Activated CD4-positive, alpha-beta T cell treated with anti-CD3 and anti-CD28 coated beads for 36 hours (primary cell): ENCODE measurements at regions of chr14 and their contacts with region 1.

Region 1: DNA sequence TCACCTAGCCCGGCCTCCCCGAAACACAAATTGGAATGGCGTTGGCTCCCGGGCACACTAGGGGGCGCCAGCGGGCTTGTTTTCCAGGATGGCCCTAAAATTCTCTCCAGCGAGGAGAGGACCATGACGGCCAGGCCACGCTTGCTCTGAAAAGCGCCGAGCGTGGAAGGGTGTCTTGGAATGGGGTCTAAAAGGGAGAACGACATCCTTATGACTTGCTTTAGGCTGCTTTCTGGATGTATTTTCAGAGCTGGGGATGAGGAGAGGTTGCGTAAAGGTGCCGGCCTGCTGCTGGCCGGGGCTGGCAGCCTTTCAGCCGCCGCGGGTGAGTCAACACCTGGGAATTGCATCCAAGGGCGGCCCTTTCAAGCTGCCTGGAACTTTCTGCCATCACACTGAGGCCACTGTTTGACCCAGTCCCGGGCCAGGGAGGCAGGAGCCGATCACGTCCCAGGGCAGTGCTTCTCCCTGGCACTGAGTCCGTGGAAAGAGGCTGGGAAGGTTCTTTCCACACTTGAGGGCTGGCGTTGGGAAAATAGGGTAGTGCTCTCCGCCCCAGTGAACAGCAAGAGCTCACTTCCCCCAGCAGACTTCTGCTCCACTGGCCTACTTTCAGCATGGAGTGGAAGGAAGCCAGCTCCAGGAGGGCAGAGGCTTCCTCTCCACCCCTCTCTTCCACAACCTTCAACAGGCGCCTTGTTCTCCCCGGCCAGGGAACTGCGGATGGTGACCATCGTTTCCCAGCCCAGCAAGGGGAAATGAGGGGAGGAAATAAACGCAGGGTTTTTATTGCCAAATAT is 216.2 kb downstream of the TTC8 start:
- DNase-seq: peak; percentile 91
- ATAC-seq: peak; percentile 83
- H3K4me3 Mint-ChIP-seq: peak overlapping the region; percentile 59
- H3K27ac Mint-ChIP-seq: peak overlapping the region; percentile 81
- H3K4me1 Mint-ChIP-seq: peaks cover 11% of the 10 kb centered on the region
- H3K27me3 Mint-ChIP-seq: peaks cover 20% of the 10 kb centered on the region

Region 2: GRCh38 chr14:88551094-88551870 is 489.4 kb before region 1 on chr14:
- CTCF ChIA-PET with region 1: no interaction called
- POLR2A ChIA-PET with region 1: no interaction called
- intact Hi-C with region 1: no loop called
- DNase-seq: peak; percentile 71
- ATAC-seq: peak; percentile 70
- H3K4me3 Mint-ChIP-seq: peak overlapping the region; percentile 63
- H3K27ac Mint-ChIP-seq: no peak overlapping the region
- H3K4me1 Mint-ChIP-seq: peaks cover 13% of the 10 kb centered on the region
- H3K27me3 Mint-ChIP-seq: peaks cover 37% of the 10 kb centered on the region

Region 3: DNA sequence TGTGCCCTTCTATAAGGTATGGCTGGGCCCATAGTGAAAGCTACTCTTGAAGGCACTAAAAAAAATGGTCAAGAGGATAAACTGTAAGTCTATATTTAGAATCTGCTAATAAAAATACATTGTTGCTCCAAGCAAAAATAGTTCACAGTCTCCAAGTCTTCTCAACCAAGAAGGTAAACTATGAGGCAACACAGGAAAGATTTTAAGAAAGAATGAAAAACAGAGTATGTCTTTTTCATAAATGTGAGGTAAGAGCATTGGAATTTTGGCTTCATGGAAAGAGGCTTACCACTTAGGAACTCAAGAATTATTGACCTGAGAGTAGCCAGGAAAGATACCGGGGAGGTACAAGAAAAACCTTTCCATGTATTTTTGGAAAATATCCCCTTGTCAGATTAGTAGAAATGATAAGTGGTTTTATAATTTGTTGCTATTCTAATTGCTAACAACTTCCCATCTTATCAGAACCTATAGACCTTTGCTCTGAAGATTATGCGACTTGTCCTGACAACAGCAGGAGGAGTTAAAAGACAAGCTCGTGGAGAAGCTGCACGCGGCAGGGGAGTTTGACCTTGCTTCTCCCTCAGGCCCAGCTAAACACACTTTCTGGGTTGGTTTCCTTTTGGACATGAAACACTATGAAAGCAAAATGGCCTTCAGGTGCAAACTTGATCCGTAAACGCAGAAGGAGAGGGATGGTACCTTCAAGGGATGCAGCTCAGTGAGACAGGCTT is 138.3 kb after region 1 on chr14:
- CTCF ChIA-PET with region 1: no interaction called
- POLR2A ChIA-PET with region 1: no interaction called
- intact Hi-C with region 1: loop called in 1 of 2 experiments (anchors 5 kb)
- DNase-seq: no peak
- ATAC-seq: no peak
- H3K4me3 Mint-ChIP-seq: no peak overlapping the region
- H3K27ac Mint-ChIP-seq: peak overlapping the region; percentile 20
- H3K4me1 Mint-ChIP-seq: peaks cover 10% of the 10 kb centered on the region
- H3K27me3 Mint-ChIP-seq: no peaks in the 10 kb centered on the region

Region 4: GRCh38 chr14:89422181-89422951 is 381.7 kb after region 1 on chr14:
- CTCF ChIA-PET with region 1: no interaction called
- POLR2A ChIA-PET with region 1: no interaction called
- intact Hi-C with region 1: loop called (anchors 2 to 5 kb)
- DNase-seq: peak; percentile 74
- ATAC-seq: peak; percentile 70
- H3K4me3 Mint-ChIP-seq: no peak overlapping the region
- H3K27ac Mint-ChIP-seq: peak overlapping the region; percentile 65
- H3K4me1 Mint-ChIP-seq: peaks cover 74% of the 10 kb centered on the region
- H3K27me3 Mint-ChIP-seq: no peaks in the 10 kb centered on the region

Region 5: GRCh38 chr14:89899917-89900663 is 859.4 kb after region 1 on chr14:
- CTCF ChIA-PET with region 1: interaction called, 3 read pairs
- POLR2A ChIA-PET with region 1: no interaction called
- intact Hi-C with region 1: loop called (anchors 1 to 2 kb)
- DNase-seq: peak; percentile 37
- ATAC-seq: no peak
- H3K4me3 Mint-ChIP-seq: no peak overlapping the region
- H3K27ac Mint-ChIP-seq: no peak overlapping the region
- H3K4me1 Mint-ChIP-seq: peaks cover 14% of the 10 kb centered on the region
- H3K27me3 Mint-ChIP-seq: peaks cover 12% of the 10 kb centered on the region